ENCODE measurements at regions of chr13 and their contacts with region 1.

Region 1: DNA sequence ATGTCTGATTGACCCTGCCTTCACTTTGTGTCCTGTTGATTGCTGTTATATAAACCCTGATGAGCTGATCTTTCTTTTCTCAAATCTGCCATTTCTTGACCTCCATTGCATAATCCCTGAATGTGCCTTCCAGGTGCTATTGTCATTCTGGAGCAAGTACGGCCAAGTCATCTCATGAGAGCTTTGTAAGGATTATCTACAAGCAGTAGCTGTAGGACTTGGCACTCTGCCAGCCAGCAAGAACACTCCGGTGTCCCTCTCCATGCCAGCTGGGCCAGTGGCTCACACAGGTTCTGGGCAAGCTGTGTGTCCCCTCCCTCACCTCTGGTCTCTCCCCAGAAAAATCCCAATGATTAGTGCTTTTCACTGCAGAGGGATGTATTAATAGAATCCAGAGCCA is 348.1 kb downstream of the FOXO1 start:
- DNase-seq: peak; percentile 23
- H3K4me3 Mint-ChIP-seq: no peak overlapping the region
- H3K27ac Mint-ChIP-seq: no peak overlapping the region
- H3K4me1 Mint-ChIP-seq: peaks cover 64% of the 10 kb centered on the region
- H3K27me3 Mint-ChIP-seq: no peaks in the 10 kb centered on the region

Region 2: DNA sequence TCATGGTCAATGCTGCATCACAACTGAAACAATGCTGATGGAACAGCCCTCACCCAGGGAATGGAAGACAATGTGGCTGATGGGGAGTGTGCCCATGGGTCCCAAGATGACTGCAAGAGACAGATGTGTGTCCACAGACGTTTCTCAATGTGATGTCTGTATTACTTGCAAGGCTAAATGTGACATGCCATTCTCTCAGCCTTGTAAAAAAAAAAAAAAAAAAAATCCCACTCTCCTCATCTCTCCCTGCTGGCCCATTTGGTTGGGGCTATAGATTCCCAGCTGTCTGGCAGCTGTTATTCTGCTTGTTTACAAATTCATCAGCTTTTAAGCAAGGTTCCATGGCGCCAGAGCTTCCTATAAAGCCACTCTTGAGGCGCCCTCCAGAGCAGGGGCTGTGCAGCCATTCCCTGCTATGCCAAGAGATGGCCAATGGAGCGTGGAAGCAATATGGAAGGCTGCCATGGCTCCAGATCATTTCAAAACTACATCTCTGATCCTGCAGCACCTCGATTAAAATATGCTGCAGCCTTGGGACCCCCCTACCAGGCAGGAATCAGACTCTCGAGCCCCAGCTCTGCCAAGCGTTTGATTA is 53.3 kb after region 1 on chr13:
- CTCF ChIA-PET with region 1: interaction called, 3 read pairs
- intact Hi-C with region 1: loop called (anchors 2 kb)
- DNase-seq: no peak
- H3K4me3 Mint-ChIP-seq: no peak overlapping the region
- H3K27ac Mint-ChIP-seq: no peak overlapping the region
- H3K4me1 Mint-ChIP-seq: peaks cover 49% of the 10 kb centered on the region
- H3K27me3 Mint-ChIP-seq: no peaks in the 10 kb centered on the region